Lower leg skin (tissue), 4 donors: ENCODE measurements at regions of chr4 and their contacts with region 1.

Region 1: GRCh38 chr4:105146276-105147015 is at the start of gene TET2:
- DNase-seq: peak; percentile 65 to 94
- H3K4me3 ChIP-seq: peak within 1 kb of the TSS; percentile 66
- CTCF ChIP-seq: no peak
- POLR2A ChIP-seq: peak in 1 of 2 donors; percentile 7
- total RNA-seq, gene TET2: 31.0 to 36.0 (median 32.8) TPM

Region 2: GRCh38 chr4:105471566-105472176 is 325.2 kb after region 1 on chr4:
- intact Hi-C with region 1: loop called (anchors 10 kb)
- DNase-seq: peak; percentile 69 to 86
- H3K4me3 ChIP-seq: no peak overlapping the region
- CTCF ChIP-seq: no peak
- POLR2A ChIP-seq: no peak

Region 3: GRCh38 chr4:105966029-105966428 is 819.6 kb after region 1 on chr4:
- intact Hi-C with region 1: no loop called
- DNase-seq: no peak
- H3K4me3 ChIP-seq: no peak overlapping the region
- CTCF ChIP-seq: no peak
- POLR2A ChIP-seq: no peak

Region 4: GRCh38 chr4:106126062-106126461 is 979.6 kb after region 1 on chr4:
- intact Hi-C with region 1: loop called (anchors 5 kb)
- DNase-seq: no peak
- H3K4me3 ChIP-seq: no peak overlapping the region
- CTCF ChIP-seq: no peak
- POLR2A ChIP-seq: no peak